GM12878 (cell line): ENCODE measurements at regions of chr2 and their contacts with region 1.

Region 1: GRCh38 chr2:39227628-39228412 is 15.9 kb downstream of the CDKL4 start:
- DNase-seq: peak; percentile 28
- ATAC-seq: peak; percentile 93
- H3K4me3 ChIP-seq: no peak overlapping the region
- H3K27ac ChIP-seq: no peak overlapping the region
- H3K4me1 ChIP-seq: peaks cover 3% of the 10 kb centered on the region; the same call in 1 of the 2 replicates
- H3K27me3 ChIP-seq: no peaks in the 10 kb centered on the region
- CTCF ChIP-seq: peak; percentile 78 to 89 (median 79); a peak in 5 of 6 replicates
- EP300 ChIP-seq: no peak
- POLR2A ChIP-seq: no peak
- RAD21 ChIP-seq: peak; percentile 90

Region 2: DNA sequence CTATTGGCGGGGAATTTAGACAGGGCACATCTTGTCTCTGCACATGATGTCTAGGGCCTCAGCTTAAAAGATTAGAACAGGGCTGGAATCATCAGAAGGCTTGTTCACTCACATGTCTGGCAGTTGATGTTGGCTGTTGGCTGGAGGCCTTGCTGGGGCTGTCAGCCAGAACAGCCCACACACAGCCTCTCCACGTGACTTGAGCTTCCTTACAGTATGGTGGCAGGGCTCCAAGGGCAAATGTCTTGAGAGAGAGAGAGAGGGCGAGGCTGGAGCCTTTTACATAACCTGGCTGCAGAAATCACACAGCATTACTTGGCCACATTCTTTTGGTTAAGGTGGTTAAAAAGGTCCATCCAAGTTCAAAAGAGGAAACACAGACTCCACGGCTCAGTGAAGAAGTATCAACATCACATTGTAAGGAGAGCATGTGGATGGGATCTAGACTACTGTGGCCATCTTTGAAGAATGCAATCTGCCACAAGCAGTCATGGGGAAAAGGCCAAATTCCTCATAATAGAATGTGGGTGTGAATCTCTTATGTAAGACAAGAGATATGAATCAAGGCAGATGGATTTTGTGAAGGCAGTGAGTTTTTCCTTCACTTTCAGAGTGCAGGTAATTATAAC is 507.1 kb before region 1 on chr2:
- CTCF ChIA-PET with region 1: no interaction called
- POLR2A ChIA-PET with region 1: no interaction called
- RAD21 ChIA-PET with region 1: no interaction called
- SMC1A ChIA-PET with region 1: no interaction called
- in situ Hi-C with region 1: no loop called
- intact Hi-C with region 1: no loop called
- DNase-seq: peak; percentile 40
- ATAC-seq: peak; percentile 56
- H3K4me3 ChIP-seq: no peak overlapping the region
- H3K27ac ChIP-seq: no peak overlapping the region
- H3K4me1 ChIP-seq: peaks cover 33% of the 10 kb centered on the region
- H3K27me3 ChIP-seq: no peaks in the 10 kb centered on the region
- CTCF ChIP-seq: no peak
- EP300 ChIP-seq: no peak; a peak in 1 of 4 replicates
- POLR2A ChIP-seq: no peak
- RAD21 ChIP-seq: no peak

Region 3: GRCh38 chr2:38771632-38772031 is 456.2 kb before region 1 on chr2:
- CTCF ChIA-PET with region 1: no interaction called
- POLR2A ChIA-PET with region 1: no interaction called
- RAD21 ChIA-PET with region 1: no interaction called
- SMC1A ChIA-PET with region 1: no interaction called
- in situ Hi-C with region 1: no loop called
- intact Hi-C with region 1: no loop called
- DNase-seq: no peak
- ATAC-seq: no peak
- H3K4me3 ChIP-seq: no peak overlapping the region
- H3K27ac ChIP-seq: no peak overlapping the region
- H3K4me1 ChIP-seq: no peaks in the 10 kb centered on the region
- H3K27me3 ChIP-seq: no peaks in the 10 kb centered on the region
- CTCF ChIP-seq: no peak
- EP300 ChIP-seq: no peak
- POLR2A ChIP-seq: no peak
- RAD21 ChIP-seq: no peak

Region 4: DNA sequence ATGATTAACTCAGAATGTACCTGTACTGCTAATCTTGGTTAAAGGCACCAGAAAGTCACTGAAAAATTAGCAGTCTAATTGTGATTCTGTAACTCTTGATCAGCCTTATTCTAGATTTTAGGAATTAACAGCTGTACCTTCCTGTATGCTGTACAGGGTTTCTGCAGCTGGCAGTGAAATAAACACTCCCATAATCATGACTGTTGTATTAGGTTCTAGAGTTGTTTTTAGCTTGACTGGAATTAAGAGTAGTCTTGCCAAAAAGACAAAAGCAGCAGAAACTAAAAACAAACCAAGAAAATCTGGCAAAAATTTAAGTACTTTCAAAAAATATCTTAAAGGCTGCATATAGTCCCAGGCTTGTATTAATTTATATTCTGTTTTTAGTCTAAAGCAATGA is 210.5 kb before region 1 on chr2:
- CTCF ChIA-PET with region 1: interaction called, 12 read pairs
- POLR2A ChIA-PET with region 1: no interaction called
- RAD21 ChIA-PET with region 1: interaction called, 4 read pairs
- SMC1A ChIA-PET with region 1: interaction called, 4 read pairs
- in situ Hi-C with region 1: no loop called
- intact Hi-C with region 1: no loop called
- DNase-seq: no peak
- ATAC-seq: no peak
- H3K4me3 ChIP-seq: no peak overlapping the region
- H3K27ac ChIP-seq: no peak overlapping the region
- H3K4me1 ChIP-seq: no peaks in the 10 kb centered on the region
- H3K27me3 ChIP-seq: no peaks in the 10 kb centered on the region
- CTCF ChIP-seq: no peak
- EP300 ChIP-seq: no peak
- POLR2A ChIP-seq: no peak
- RAD21 ChIP-seq: no peak

Region 5: GRCh38 chr2:39069136-39069515 is 158.7 kb before region 1 on chr2:
- CTCF ChIA-PET with region 1: interaction called, 285 read pairs
- POLR2A ChIA-PET with region 1: no interaction called
- RAD21 ChIA-PET with region 1: interaction called, 125 read pairs
- SMC1A ChIA-PET with region 1: interaction called, 71 read pairs
- in situ Hi-C with region 1: loop called (anchors 5 kb)
- intact Hi-C with region 1: no loop called
- DNase-seq: no peak
- ATAC-seq: no peak
- H3K4me3 ChIP-seq: no peak overlapping the region
- H3K27ac ChIP-seq: no peak overlapping the region
- H3K4me1 ChIP-seq: no peaks in the 10 kb centered on the region
- H3K27me3 ChIP-seq: no peaks in the 10 kb centered on the region
- CTCF ChIP-seq: no peak; a peak in 1 of 6 replicates
- EP300 ChIP-seq: no peak
- POLR2A ChIP-seq: no peak
- RAD21 ChIP-seq: peak; percentile 32; the same call in 1 of the 2 replicates

Region 6: DNA sequence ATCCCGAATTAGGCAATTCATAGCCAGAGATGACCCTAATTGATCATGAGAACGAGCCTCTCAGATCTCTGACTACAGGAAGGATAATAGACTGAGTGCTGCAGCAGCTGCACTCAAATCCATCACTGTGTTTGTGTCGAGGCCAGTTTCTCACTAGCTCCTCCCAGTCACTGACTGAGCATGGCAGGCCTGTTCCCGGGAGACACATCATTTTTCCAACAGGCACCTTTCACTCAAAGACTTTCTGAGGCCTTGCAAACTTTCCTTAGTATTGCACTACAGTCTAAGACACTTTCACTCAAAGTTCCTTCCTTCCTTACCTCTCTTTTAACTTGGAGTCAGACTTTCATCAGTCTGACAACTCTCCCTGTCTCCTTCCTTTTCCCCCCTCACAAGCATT is 120.7 kb before region 1 on chr2:
- CTCF ChIA-PET with region 1: interaction called, 12 read pairs
- POLR2A ChIA-PET with region 1: no interaction called
- RAD21 ChIA-PET with region 1: interaction called, 4 read pairs
- SMC1A ChIA-PET with region 1: interaction called, 5 read pairs
- in situ Hi-C with region 1: no loop called
- intact Hi-C with region 1: no loop called
- DNase-seq: no peak
- ATAC-seq: 0 out of 3 replicates have a peak, but pooled peaks have one; percentile 30
- H3K4me3 ChIP-seq: no peak overlapping the region
- H3K27ac ChIP-seq: no peak overlapping the region
- H3K4me1 ChIP-seq: peaks cover 9% of the 10 kb centered on the region; the same call in 1 of the 2 replicates
- H3K27me3 ChIP-seq: no peaks in the 10 kb centered on the region
- CTCF ChIP-seq: no peak
- EP300 ChIP-seq: no peak
- POLR2A ChIP-seq: no peak
- RAD21 ChIP-seq: no peak

Region 7: GRCh38 chr2:39243476-39244123 is 15.8 kb after region 1 on chr2 and contains the start of gene CDKL4:
- CTCF ChIA-PET with region 1: interaction called, 5 read pairs
- POLR2A ChIA-PET with region 1: no interaction called
- RAD21 ChIA-PET with region 1: interaction called, 4 read pairs
- SMC1A ChIA-PET with region 1: interaction called, 10 read pairs
- in situ Hi-C with region 1: no loop called
- intact Hi-C with region 1: no loop called
- DNase-seq: no peak
- ATAC-seq: no peak
- H3K4me3 ChIP-seq: no peak within 1 kb of the TSS; the same call in 1 of the 2 replicates
- H3K27ac ChIP-seq: no peak within 1 kb of the TSS
- H3K4me1 ChIP-seq: no peaks in the 10 kb centered on the region
- H3K27me3 ChIP-seq: no peaks in the 10 kb centered on the region
- CTCF ChIP-seq: no peak
- EP300 ChIP-seq: no peak
- POLR2A ChIP-seq: no peak
- RAD21 ChIP-seq: no peak
- polyA plus RNA-seq, gene CDKL4: not detected

Region 8: DNA sequence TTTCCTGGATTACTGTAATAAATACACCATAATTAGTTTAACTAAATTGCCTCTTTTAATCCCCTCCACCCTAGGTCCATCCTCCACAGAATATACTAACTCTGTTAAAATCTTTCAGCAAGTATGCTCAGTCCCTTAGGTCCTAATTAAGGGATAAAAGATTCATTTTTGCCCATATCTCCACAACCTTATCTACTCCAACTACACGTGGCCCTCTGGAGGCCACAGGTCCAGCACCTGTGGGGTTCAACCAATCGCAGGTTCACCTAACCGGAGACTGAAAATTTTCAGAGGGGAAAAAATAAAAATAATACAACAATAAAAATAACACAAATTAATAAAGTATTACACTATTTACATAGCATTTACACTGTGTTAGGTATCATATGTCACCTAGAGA is 122.8 kb after region 1 on chr2:
- CTCF ChIA-PET with region 1: no interaction called
- POLR2A ChIA-PET with region 1: no interaction called
- RAD21 ChIA-PET with region 1: no interaction called
- SMC1A ChIA-PET with region 1: no interaction called
- in situ Hi-C with region 1: no loop called
- intact Hi-C with region 1: no loop called
- DNase-seq: no peak
- ATAC-seq: no peak
- H3K4me3 ChIP-seq: no peak overlapping the region
- H3K27ac ChIP-seq: no peak overlapping the region
- H3K4me1 ChIP-seq: no peaks in the 10 kb centered on the region
- H3K27me3 ChIP-seq: no peaks in the 10 kb centered on the region
- CTCF ChIP-seq: no peak
- EP300 ChIP-seq: no peak
- POLR2A ChIP-seq: no peak
- RAD21 ChIP-seq: no peak